Activated CD4-positive, alpha-beta T cell treated with anti-CD3 and anti-CD28 coated beads, Interleukin-2, amount 10 ng/mL, durations not matched to agents 24 days and 14 days (primary cell): ENCODE measurements at regions of chr7 and their contacts with region 1.

Region 1: DNA sequence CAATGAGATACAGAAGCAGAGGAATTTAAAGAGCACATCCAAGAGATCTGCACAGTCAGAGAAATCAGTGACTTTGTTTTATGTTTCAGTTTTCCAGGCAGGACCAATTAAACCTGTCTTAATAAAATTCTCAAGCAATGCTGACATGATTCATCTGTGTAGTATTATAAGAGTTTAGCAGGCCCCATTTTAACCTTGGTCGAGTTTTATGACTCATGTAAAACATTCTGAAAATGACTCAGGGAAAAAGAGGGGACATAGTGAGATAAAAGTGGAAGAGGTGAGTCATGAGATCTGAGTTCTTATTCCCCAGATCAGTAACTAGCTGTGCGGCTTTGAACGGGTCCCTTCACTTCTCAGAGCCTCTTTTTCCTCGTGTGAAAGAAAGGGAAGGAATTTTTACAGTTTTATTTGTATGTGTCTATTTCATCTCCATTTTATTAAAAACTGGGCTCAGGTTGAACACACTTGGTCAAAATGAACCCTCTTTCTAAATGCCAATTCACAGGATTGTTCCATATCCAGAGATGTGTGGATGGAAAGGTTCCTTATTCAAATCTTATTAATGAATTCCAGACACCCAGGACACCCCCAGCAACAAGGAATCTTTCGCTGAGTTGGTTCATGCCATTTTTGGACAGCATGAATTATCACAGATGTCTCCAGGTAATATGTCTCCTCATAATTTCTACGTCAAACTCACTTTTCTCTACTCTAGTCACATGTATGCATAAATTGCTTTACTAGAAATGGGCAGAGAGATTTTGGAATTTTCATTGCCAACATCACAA is 143.2 kb downstream of the JAZF1 start:
- DNase-seq: no peak
- H3K4me3 Mint-ChIP-seq: no peak overlapping the region
- H3K27ac Mint-ChIP-seq: peak overlapping the region; percentile 54
- H3K4me1 Mint-ChIP-seq: peaks cover 25% of the 10 kb centered on the region
- H3K27me3 Mint-ChIP-seq: peaks cover 30% of the 10 kb centered on the region

Region 2: DNA sequence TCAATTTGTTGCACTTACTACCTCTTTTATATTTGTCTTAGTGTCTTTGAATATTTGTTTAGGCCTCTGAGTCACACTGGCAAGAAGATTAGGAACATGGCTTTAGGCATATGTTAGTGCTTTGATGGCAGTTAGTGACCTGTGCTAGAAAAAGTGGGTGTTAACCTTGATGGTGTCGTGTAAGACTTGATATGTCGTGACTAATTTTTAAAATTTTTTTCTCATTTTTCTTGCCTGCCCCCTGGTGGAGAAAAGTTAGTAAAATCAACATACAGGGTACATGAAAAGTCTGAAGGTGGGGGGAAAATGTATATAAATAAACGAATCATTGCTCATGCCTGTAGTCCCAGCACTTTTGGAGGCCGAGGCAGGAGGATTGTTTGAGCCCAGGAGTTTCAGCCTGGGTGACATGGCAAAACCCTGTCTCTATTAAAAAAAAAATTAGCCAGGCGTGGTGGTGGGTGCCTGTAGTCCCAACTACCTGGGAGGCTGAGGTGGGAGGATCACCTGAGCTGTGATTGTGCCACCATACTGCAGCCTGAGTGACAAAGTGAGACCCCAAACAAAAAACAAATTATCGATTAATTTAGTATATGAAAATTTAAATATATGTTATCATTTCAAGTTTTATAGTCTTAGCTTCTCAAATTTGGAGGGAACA is 252.9 kb before region 1 on chr7:
- intact Hi-C with region 1: loop called (anchors 10 kb)
- DNase-seq: peak; percentile 71
- H3K4me3 Mint-ChIP-seq: no peak overlapping the region
- H3K27ac Mint-ChIP-seq: no peak overlapping the region
- H3K4me1 Mint-ChIP-seq: peaks cover 7% of the 10 kb centered on the region
- H3K27me3 Mint-ChIP-seq: no peaks in the 10 kb centered on the region

Region 3: DNA sequence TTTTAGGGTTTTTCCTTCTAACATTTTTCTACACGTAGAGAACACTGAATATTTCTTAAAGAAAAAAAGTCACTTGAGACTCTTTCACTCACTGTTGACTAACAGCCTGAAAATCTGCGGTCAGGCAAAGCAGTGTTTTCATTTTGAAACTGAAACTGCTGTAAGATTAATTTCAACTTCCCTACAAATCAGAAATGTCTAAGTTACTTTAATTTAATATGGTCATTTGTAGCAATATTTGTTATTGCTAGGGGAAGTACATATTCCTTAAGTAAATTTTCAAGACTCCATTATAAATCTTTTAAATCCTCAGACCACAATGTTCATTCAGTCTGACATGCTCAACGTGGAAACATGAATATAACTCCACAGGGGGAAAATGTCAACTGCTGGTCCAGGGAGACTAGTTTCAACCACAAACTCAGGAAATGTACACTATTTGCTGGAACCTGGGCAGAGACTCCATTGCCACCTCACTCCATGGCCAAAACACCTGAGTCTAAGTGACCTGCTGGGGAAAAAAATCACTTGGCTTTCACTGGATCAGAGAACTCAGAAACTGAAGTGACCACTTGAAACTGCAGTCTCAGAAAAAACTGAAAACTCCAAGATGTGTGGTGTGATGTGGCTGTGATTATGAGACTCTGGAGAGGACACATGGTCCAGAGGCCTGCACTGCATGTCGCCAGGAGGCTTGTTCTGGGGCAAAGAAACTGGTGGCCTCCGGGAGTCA is 136.2 kb before region 1 on chr7:
- intact Hi-C with region 1: loop called (anchors 5 kb)
- DNase-seq: peak; percentile 83
- H3K4me3 Mint-ChIP-seq: peak overlapping the region; percentile 37
- H3K27ac Mint-ChIP-seq: no peak overlapping the region
- H3K4me1 Mint-ChIP-seq: peaks cover 22% of the 10 kb centered on the region
- H3K27me3 Mint-ChIP-seq: peaks cover 11% of the 10 kb centered on the region

Region 4: DNA sequence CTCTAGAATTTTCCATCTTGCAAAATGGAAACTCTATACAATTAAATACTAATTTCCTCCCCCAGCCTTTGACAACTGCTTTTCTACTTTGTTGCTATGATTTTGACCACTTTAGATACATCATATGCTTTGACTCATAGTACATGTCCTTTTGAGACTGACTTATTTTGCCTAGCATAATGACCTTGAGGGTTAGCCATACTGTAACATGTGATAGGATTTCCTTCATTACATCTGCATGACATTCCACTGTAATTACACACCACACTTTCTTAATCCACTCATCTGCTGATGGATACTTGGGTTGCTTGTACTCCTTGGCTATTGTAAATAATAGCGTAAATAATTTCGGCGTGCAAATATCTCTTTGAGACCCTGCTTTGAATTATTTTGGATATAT is 15.5 kb after region 1 on chr7:
- intact Hi-C with region 1: no loop called
- DNase-seq: no peak
- H3K4me3 Mint-ChIP-seq: no peak overlapping the region
- H3K27ac Mint-ChIP-seq: no peak overlapping the region
- H3K4me1 Mint-ChIP-seq: no peaks in the 10 kb centered on the region
- H3K27me3 Mint-ChIP-seq: peaks cover 11% of the 10 kb centered on the region

Region 5: DNA sequence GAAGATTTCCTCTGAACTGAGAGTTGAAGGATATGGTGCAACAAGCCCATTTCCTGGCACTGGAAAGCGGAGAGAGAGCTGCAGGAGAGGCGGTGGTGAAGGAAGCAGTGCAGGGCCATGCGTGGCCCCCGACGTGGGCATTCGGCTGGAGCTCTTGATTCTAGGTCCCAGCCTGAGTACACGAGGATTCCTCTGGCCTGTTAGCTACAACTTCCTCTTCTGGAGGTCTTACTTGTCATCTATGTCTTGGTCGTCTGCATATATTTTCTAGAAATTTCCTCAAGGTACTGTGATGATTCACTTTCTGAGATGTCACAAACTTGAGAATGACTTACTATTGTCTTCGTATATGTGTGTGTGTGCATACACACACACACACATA is 202.4 kb after region 1 on chr7:
- intact Hi-C with region 1: loop called (anchors 1 kb)
- DNase-seq: no peak
- H3K4me3 Mint-ChIP-seq: peak overlapping the region; percentile 24
- H3K27ac Mint-ChIP-seq: no peak overlapping the region
- H3K4me1 Mint-ChIP-seq: peaks cover 6% of the 10 kb centered on the region
- H3K27me3 Mint-ChIP-seq: peaks cover 46% of the 10 kb centered on the region

Region 6: GRCh38 chr7:28329661-28330363 is 292.4 kb after region 1 on chr7:
- intact Hi-C with region 1: loop called (anchors 1 kb)
- DNase-seq: peak; percentile 76
- H3K4me3 Mint-ChIP-seq: peak overlapping the region; percentile 50
- H3K27ac Mint-ChIP-seq: no peak overlapping the region
- H3K4me1 Mint-ChIP-seq: peaks cover 19% of the 10 kb centered on the region
- H3K27me3 Mint-ChIP-seq: peaks cover 8% of the 10 kb centered on the region

Region 7: DNA sequence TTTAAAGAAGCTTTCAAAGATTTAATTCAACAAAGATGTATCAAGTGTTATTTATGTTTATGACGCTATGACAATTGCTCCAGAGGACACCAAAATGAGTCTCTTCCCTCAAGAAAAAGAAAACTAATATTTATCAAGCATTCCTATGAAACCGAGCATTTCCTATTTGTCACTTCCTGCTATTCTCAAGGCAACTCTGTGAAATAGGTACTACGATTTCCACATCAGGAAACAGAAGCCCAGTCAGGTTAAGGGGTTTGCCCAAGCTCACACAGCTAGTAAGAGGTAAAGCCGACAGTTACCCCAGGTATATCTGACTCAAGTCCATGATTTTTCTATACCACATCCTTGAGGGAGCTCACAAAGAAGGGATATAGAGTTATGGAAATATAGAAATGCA is 834.8 kb after region 1 on chr7:
- intact Hi-C with region 1: no loop called
- DNase-seq: no peak
- H3K4me3 Mint-ChIP-seq: no peak overlapping the region
- H3K27ac Mint-ChIP-seq: no peak overlapping the region
- H3K4me1 Mint-ChIP-seq: no peaks in the 10 kb centered on the region
- H3K27me3 Mint-ChIP-seq: peaks cover 4% of the 10 kb centered on the region